Activated T-helper 1 cell treated with anti-CD3 and anti-CD28 coated beads, Interleukin-12 subunit alpha, Interleukin-12 subunit beta, Interleukin-2, Interleukin-4 antibody, amounts not matched to agents 30 ng/mL and 10 ng/mL and 1 ng/mL, durations not matched to agents 14 hours and 24 hours and 36 hours (primary cell): ENCODE measurements at regions of chr19 and their contacts with region 1.

Region 1: DNA sequence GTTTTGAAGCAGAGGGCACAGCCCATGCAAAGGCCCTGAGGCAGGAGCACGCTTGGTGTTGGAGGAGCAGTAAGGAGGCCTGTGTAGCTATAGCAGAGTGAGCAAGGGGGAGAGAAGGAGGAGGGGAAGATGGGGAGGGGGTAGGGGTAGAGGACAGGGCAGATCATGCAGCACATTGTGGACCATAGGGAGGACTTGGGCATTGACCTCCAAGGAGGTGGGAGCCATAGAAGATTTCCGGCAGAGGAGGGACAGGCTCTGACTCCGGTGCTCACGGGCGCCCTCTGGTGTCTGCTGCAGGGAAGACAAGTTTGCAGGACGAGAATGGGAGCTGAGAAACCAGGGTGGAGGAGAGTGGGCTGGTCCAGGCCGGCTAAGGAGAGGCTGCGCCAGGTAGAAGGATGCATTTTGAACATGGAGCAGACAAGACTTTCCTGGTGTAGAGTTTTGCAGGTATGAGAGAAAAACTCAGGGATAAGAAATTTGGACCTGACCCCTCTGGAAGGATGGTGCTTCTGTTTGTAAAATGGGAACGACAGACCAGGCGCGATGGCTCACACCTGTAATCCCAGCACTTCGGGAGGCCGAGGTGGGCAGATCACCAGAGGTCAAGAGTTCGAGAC is 13.7 kb upstream of the CREB3L3 start:
- DNase-seq: peak; percentile 78
- H3K4me3 Mint-ChIP-seq: no peak overlapping the region
- H3K27ac Mint-ChIP-seq: no peak overlapping the region
- H3K4me1 Mint-ChIP-seq: peaks cover 11% of the 10 kb centered on the region
- H3K27me3 Mint-ChIP-seq: peaks cover 7% of the 10 kb centered on the region

Region 2: GRCh38 chr19:4123615-4124568 is 15.8 kb before region 1 on chr19 and contains the start of gene MAP2K2:
- intact Hi-C with region 1: loop called (anchors 1 kb)
- DNase-seq: peak; percentile 94
- H3K4me3 Mint-ChIP-seq: peak within 1 kb of the TSS; percentile 100
- H3K27ac Mint-ChIP-seq: peak within 1 kb of the TSS; percentile 98
- H3K4me1 Mint-ChIP-seq: peaks cover 17% of the 10 kb centered on the region
- H3K27me3 Mint-ChIP-seq: no peaks in the 10 kb centered on the region
- total RNA-seq, gene MAP2K2: 131 and 135 TPM in 2 replicates

Region 3: GRCh38 chr19:4208385-4209094 is 68.8 kb after region 1 on chr19:
- intact Hi-C with region 1: loop called (anchors 1 kb)
- DNase-seq: no peak
- H3K4me3 Mint-ChIP-seq: no peak overlapping the region
- H3K27ac Mint-ChIP-seq: no peak overlapping the region
- H3K4me1 Mint-ChIP-seq: no peaks in the 10 kb centered on the region
- H3K27me3 Mint-ChIP-seq: peaks cover 6% of the 10 kb centered on the region